Panc1 (cell line): ENCODE measurements at regions of chr15 and their contacts with region 1.

Region 1: GRCh38 chr15:88657326-88658069 is 18.7 kb downstream of the ISG20 start:
- DNase-seq: no peak
- ATAC-seq: peak; percentile 85
- H3K4me3 ChIP-seq: no peak overlapping the region
- H3K27ac ChIP-seq: no peak overlapping the region
- H3K4me1 ChIP-seq: no peaks in the 10 kb centered on the region
- H3K27me3 ChIP-seq: peaks cover 4% of the 10 kb centered on the region; the same call in 1 of the 2 replicates
- CTCF ChIP-seq: peak; percentile 94

Region 2: GRCh38 chr15:88638626-88639372 is 18.7 kb before region 1 on chr15 and contains the start of gene ISG20:
- CTCF ChIA-PET with region 1: no interaction called
- POLR2A ChIA-PET with region 1: interaction called, 12 read pairs
- in situ Hi-C with region 1: no loop called
- intact Hi-C with region 1: no loop called
- DNase-seq: peak; percentile 96
- ATAC-seq: peak; percentile 86
- H3K4me3 ChIP-seq: peak within 1 kb of the TSS; percentile 43 to 48
- H3K27ac ChIP-seq: peak within 1 kb of the TSS; percentile 78
- H3K4me1 ChIP-seq: peaks cover 28% of the 10 kb centered on the region
- H3K27me3 ChIP-seq: no peaks in the 10 kb centered on the region
- CTCF ChIP-seq: no peak; the same call in 1 of the 2 replicates
- total RNA-seq, gene ISG20: 14.9 TPM

Region 3: GRCh38 chr15:88690331-88690730 is 32.8 kb after region 1 on chr15:
- CTCF ChIA-PET with region 1: interaction called, 10 read pairs
- POLR2A ChIA-PET with region 1: no interaction called
- in situ Hi-C with region 1: no loop called
- intact Hi-C with region 1: no loop called
- DNase-seq: no peak
- ATAC-seq: peak; percentile 57
- H3K4me3 ChIP-seq: no peak overlapping the region
- H3K27ac ChIP-seq: no peak overlapping the region
- H3K4me1 ChIP-seq: no peaks in the 10 kb centered on the region
- H3K27me3 ChIP-seq: peaks cover 10% of the 10 kb centered on the region
- CTCF ChIP-seq: no peak

Region 4: DNA sequence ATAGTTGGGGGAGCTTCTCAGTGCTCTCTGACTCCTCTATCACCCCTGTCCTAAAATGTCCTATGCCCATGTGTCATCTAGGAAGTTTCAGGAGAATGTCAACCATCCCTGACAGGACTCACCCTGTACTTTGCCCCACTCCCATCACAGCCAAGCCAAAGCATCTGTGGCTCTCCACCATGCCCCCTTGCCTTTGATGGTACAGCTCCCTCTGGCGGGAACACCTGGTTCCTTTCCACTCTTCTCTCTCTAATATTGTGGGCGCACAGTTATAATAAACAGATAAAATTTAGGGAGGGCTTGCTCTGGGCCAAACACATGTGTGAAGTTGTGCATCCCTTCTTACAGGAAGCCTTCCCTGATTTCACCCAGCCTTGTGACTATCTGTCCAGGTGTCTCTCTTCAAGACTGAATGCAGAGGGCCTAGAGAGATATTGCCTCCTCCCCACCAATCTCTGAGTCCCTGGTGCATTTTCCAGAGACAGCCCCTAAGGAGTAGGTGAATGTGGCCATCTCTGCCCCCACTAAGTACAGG is 44.1 kb after region 1 on chr15:
- CTCF ChIA-PET with region 1: interaction called, 3 read pairs
- POLR2A ChIA-PET with region 1: no interaction called
- in situ Hi-C with region 1: no loop called
- intact Hi-C with region 1: loop called (anchors 5 kb)
- DNase-seq: peak; percentile 10
- ATAC-seq: peak; percentile 69; the same call in 1 of the 2 replicates
- H3K4me3 ChIP-seq: no peak overlapping the region
- H3K27ac ChIP-seq: no peak overlapping the region
- H3K4me1 ChIP-seq: no peaks in the 10 kb centered on the region
- H3K27me3 ChIP-seq: peaks cover 35% of the 10 kb centered on the region
- CTCF ChIP-seq: peak; percentile 72

Region 5: DNA sequence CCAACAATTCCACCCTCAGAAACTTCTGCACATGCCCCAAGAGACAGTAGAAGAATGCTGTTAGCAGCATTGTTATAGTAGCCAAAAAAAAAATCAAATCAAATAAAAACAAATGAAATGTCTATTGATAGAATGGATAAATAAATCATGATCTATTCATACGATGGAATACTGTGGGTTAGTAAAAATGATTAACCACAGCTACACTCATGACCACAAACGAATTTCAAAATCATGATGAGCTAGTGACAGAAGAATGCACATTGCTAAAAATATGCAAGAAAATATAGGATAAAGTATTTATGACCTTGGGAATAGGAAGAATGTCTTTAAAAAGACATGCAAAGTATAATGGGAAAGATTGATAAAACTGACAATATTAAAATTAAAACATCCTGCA is 88.2 kb after region 1 on chr15:
- CTCF ChIA-PET with region 1: no interaction called
- POLR2A ChIA-PET with region 1: interaction called, 10 read pairs
- in situ Hi-C with region 1: no loop called
- intact Hi-C with region 1: no loop called
- DNase-seq: no peak
- ATAC-seq: no peak
- H3K4me3 ChIP-seq: no peak overlapping the region
- H3K27ac ChIP-seq: no peak overlapping the region
- H3K4me1 ChIP-seq: no peaks in the 10 kb centered on the region
- H3K27me3 ChIP-seq: peaks cover 10% of the 10 kb centered on the region; the same call in 1 of the 2 replicates
- CTCF ChIP-seq: no peak

Region 6: DNA sequence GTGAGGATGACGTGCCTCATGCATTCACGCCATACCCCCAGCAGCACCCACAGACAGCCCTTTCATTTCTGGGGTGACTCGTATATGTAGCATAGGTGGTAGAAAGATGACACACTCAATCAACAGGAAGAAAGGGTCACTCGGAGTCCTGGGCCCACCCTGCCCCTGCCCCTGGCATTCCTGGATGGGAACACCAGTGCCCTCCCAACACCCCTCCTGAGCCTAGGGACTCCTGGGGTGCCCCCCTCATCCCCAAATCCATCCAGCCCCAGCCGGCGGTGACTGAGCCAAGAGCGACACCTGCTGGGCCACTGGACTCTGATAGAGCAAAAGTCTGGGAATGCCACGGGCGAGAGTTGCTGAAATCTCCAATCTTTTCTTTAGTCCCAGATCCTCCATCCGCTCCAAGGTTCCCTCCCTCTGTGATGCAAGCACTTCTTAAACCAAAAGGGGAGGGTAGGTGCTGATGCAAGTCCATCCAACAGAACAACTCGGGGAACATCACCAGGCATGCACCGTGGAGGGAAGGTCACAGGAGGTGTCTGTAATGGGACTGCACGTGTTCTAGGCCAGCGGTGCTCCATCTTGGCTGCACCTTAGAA is 176.8 kb after region 1 on chr15:
- CTCF ChIA-PET with region 1: no interaction called
- POLR2A ChIA-PET with region 1: no interaction called
- in situ Hi-C with region 1: no loop called
- intact Hi-C with region 1: loop called (anchors 1 kb)
- DNase-seq: no peak
- ATAC-seq: peak; percentile 83
- H3K4me3 ChIP-seq: no peak overlapping the region
- H3K27ac ChIP-seq: no peak overlapping the region
- H3K4me1 ChIP-seq: no peaks in the 10 kb centered on the region
- H3K27me3 ChIP-seq: no peaks in the 10 kb centered on the region
- CTCF ChIP-seq: peak; percentile 92